Activated T-helper 2 cell treated with anti-CD3 and anti-CD28 coated beads, Interferon-gamma antibody, Interleukin-2, Interleukin-4, amounts not matched to agents 10 μg/mL and 5 μg/mL and 100 μg/mL, durations not matched to agents 14 hours and 24 hours and 36 hours (primary cell): ENCODE measurements at regions of chr15 and their contacts with region 1.

Region 1: DNA sequence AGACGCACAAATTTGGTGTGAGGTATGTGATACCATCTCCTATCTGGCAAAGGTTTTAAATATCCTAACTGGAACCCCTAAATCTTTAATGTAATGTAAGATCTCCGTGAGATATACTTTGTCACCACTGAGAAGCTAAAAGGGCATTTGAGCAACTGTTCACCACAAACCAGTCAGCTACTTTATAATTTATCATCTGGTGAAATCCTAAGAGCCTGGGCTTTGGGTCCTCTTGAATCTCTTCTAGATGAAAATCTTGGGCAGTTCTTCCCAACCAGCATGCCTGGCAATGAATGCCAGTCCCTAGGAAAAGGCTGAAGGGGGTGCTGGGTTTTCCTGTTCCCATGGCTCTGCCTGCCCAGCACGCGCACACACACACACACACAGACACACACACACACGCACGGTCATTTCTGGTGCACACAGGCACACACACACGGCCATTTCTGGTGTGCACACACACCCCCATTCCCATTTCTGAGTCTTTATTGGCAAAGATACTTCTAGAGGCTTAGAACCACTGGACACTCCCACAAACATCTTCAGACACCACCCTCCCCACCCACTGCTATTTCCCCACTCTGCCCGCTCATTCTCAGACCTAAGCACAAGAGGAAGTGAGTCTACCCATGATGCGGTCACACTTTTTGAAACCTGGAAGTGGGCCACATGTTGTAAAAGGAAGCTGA is 72.6 kb downstream of the MYO1E start:
- DNase-seq: peak; percentile 71
- H3K4me3 Mint-ChIP-seq: peak overlapping the region; percentile 18
- H3K27ac Mint-ChIP-seq: peak overlapping the region; percentile 59
- H3K4me1 Mint-ChIP-seq: peaks cover 61% of the 10 kb centered on the region
- H3K27me3 Mint-ChIP-seq: no peaks in the 10 kb centered on the region

Region 2: GRCh38 chr15:58898150-58898680 is 401.9 kb before region 1 on chr15:
- intact Hi-C with region 1: no loop called
- DNase-seq: no peak
- H3K4me3 Mint-ChIP-seq: no peak overlapping the region
- H3K27ac Mint-ChIP-seq: no peak overlapping the region
- H3K4me1 Mint-ChIP-seq: peaks cover 23% of the 10 kb centered on the region
- H3K27me3 Mint-ChIP-seq: no peaks in the 10 kb centered on the region

Region 3: DNA sequence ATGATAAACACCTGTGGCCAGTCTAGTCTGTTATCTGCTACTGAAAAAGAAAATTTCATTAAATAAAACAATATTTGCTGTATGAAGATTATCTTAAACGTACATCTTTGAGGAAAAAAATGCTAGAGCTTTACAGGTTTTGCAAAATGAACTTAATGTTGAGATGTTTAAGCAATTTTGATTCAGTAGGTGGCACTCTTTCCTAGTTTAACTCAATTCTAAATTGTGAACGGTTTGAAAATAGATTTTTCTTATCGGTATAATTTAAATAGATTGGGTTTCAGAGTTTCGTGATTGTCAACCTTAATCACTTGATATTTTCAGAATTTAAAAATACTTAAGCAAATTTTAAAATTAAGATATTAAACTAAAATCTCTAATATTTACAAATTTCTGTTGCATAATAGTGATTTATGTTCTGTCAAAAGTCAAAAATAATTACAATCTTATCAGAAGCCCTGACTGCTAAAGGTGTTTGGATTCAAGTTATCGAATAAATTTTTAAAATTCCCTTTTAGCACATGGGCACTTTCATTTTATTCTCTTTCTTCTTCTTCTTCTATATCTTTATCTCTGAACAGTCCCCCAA is 319.6 kb before region 1 on chr15:
- intact Hi-C with region 1: loop called (anchors 2 kb)
- DNase-seq: no peak
- H3K4me3 Mint-ChIP-seq: no peak overlapping the region
- H3K27ac Mint-ChIP-seq: peak overlapping the region; percentile 46
- H3K4me1 Mint-ChIP-seq: peaks cover 34% of the 10 kb centered on the region
- H3K27me3 Mint-ChIP-seq: peaks cover 10% of the 10 kb centered on the region

Region 4: GRCh38 chr15:59174835-59175831 is 124.9 kb before region 1 on chr15:
- intact Hi-C with region 1: loop called (anchors 10 kb)
- DNase-seq: peak; percentile 22
- H3K4me3 Mint-ChIP-seq: no peak overlapping the region
- H3K27ac Mint-ChIP-seq: no peak overlapping the region
- H3K4me1 Mint-ChIP-seq: peaks cover 16% of the 10 kb centered on the region
- H3K27me3 Mint-ChIP-seq: peaks cover 6% of the 10 kb centered on the region

Region 5: DNA sequence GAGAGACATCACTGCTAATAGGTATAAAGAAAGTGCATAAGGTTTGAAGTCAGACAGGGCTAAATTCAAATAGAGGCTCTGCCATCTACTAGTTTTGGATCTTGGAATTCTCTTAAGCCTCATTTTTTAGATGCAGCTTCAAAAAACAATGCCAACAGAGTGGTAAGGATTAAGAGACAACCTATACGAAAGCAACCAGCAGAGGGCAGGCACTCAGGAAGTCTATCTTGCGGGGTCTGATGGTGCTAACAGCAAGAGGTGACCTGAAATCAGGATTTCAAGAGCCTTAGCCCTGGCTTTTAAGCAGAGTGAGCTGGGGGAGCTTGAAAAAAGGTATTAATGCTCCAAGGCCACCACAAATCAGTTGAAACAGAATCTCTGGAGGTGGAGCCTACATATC is 52.7 kb before region 1 on chr15:
- intact Hi-C with region 1: loop called (anchors 2 kb)
- DNase-seq: peak; percentile 45
- H3K4me3 Mint-ChIP-seq: no peak overlapping the region
- H3K27ac Mint-ChIP-seq: no peak overlapping the region
- H3K4me1 Mint-ChIP-seq: peaks cover 39% of the 10 kb centered on the region
- H3K27me3 Mint-ChIP-seq: peaks cover 2% of the 10 kb centered on the region

Region 6: GRCh38 chr15:59255647-59256380 is 44.3 kb before region 1 on chr15:
- intact Hi-C with region 1: loop called (anchors 1 kb)
- DNase-seq: peak; percentile 58
- H3K4me3 Mint-ChIP-seq: peak overlapping the region; percentile 22
- H3K27ac Mint-ChIP-seq: peak overlapping the region; percentile 41
- H3K4me1 Mint-ChIP-seq: peaks cover 53% of the 10 kb centered on the region
- H3K27me3 Mint-ChIP-seq: peaks cover 1% of the 10 kb centered on the region

Region 7: DNA sequence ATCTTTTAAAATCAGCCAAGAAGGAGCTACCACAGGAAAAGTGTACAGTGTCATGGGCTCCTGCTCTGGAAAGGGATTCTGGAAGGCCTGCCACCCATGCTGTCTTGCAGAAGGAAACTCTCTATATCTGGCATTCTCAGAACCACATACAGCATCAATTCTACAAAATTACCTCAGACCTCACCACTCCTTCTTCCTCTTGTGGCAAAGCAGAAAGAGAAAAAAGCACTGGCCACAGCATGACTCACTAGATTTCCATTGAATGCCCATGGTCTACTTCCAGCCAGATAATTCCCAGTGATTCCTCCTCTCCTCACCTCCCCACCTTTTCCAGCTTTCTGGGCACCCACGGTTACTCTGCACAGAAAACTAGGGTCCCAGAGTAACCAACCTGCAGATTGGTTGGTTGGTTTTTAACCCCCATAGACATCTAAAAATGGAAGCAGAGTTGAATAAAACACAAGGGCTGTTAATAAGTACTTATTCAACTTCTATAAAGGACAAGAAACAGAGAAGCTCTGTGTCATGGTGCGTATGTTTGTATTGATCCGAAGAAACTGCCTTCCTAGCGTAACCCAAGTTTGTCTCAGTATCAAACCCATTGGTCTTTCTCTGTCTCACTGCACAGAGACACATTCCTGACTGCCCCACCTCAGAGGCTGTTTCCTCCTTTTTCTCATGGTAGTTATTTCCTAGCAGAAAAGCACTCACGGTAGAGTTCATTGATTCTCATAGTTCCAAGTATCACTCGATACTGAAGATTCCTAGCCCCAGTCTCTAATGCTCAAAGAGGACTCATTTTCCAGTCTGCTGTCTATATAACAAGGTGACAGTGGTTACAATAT is 25.7 kb before region 1 on chr15:
- intact Hi-C with region 1: loop called (anchors 2 kb)
- DNase-seq: no peak
- H3K4me3 Mint-ChIP-seq: no peak overlapping the region
- H3K27ac Mint-ChIP-seq: peak overlapping the region; percentile 71
- H3K4me1 Mint-ChIP-seq: peaks cover 64% of the 10 kb centered on the region
- H3K27me3 Mint-ChIP-seq: peaks cover 17% of the 10 kb centered on the region

Region 8: GRCh38 chr15:59349680-59350420 is 49.8 kb after region 1 on chr15:
- intact Hi-C with region 1: loop called (anchors 1 kb)
- DNase-seq: no peak
- H3K4me3 Mint-ChIP-seq: peak overlapping the region; percentile 27
- H3K27ac Mint-ChIP-seq: peak overlapping the region; percentile 51
- H3K4me1 Mint-ChIP-seq: peaks cover 38% of the 10 kb centered on the region
- H3K27me3 Mint-ChIP-seq: peaks cover 6% of the 10 kb centered on the region